ENCODE measurements at regions of chr6 and their contacts with region 1.

Region 1: DNA sequence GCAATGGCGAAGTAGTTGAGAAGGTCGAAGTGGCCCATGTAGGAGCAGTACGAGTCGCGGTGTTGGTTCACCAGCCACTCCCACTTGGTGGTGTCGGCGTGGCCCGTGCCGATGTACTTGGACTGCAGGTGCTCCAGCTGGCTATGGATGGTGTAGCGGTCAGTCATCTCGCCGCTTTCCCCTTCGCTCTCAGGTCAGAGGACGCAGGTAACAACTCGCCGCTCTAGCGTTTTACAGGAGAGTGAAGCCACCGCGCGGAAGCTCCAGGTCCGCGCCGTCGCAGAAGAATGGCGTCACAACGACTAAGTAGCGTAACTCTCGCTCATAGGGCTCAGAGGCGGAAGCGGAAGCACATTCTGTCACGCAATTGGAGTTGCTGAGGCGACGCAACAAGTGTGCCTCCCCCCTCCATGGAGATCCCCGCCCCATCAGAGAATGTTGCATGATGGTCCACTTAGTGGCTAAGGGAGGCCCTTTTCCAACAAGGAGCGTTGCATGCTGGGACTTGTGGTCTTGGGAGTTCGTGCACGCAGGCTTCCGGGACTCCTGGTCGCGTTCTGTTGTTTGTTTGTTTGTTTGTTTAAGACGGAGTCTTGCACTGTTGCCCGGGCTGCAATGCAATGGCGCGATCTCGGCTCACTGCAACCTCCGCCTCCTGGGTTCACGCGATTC is at the start of gene SF3B5:
- DNase-seq: peak; percentile 97
- H3K4me3 Mint-ChIP-seq: peak within 1 kb of the TSS; percentile 93
- H3K27ac Mint-ChIP-seq: peak within 1 kb of the TSS; percentile 92
- H3K4me1 Mint-ChIP-seq: peaks cover 21% of the 10 kb centered on the region
- H3K27me3 Mint-ChIP-seq: no peaks in the 10 kb centered on the region
- total RNA-seq, gene SF3B5: 207 and 208 TPM in 2 replicates

Region 2: GRCh38 chr6:143450453-143451371 is 644.8 kb before region 1 on chr6 and contains the starts of genes ADAT2 and PEX3:
- intact Hi-C with region 1: loop called (anchors 1 kb)
- DNase-seq: peak; percentile 93
- H3K4me3 Mint-ChIP-seq: peak within 1 kb of the TSS; percentile 94
- H3K27ac Mint-ChIP-seq: peak within 1 kb of the TSS; percentile 97
- H3K4me1 Mint-ChIP-seq: peaks cover 36% of the 10 kb centered on the region
- H3K27me3 Mint-ChIP-seq: no peaks in the 10 kb centered on the region
- total RNA-seq, gene ADAT2: 35.7 and 37.6 TPM in 2 replicates
- total RNA-seq, gene PEX3: 21.4 and 23.6 TPM in 2 replicates

Region 3: GRCh38 chr6:143940011-143940597 is 155.4 kb before region 1 on chr6:
- intact Hi-C with region 1: loop called (anchors 5 kb)
- DNase-seq: peak; percentile 47
- H3K4me3 Mint-ChIP-seq: no peak overlapping the region
- H3K27ac Mint-ChIP-seq: no peak overlapping the region
- H3K4me1 Mint-ChIP-seq: peaks cover 6% of the 10 kb centered on the region
- H3K27me3 Mint-ChIP-seq: peaks cover 3% of the 10 kb centered on the region

Region 4: DNA sequence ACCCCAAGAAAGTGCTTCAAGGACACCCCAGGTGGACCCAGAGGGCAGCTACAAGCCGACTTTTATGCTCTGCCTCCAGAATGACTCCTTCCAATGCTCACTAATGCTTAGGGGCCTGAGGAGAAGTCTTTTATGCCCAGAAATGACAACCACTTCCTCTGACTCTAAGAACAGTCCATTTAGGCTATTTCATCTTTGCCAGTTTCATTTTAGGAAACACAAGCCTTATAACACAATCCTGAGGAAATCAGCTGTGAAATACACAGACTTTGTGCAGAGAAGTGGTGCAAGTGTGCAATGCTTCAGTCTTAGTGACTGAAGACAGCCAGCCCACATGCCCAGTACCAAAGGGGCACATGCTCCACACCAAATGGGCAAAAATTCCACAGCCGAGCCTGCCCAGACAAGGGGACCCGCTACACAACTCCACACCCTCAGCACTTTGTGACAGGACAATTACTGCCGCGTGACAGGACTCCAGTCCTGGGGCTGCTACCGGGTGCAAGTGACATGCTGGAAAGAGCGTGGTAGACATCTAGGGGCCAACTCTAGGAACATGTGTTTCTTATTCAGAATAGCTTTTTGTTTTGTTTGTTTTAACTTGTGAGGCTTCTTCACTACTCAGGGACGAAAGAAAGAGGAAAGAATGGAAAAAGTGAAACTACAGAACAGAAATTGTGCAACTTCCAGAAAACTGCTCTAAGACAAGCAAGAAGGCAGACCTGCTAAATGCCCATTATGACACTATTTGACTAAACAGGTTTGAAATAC is 59.2 kb before region 1 on chr6:
- intact Hi-C with region 1: no loop called
- DNase-seq: no peak
- H3K4me3 Mint-ChIP-seq: peak overlapping the region; percentile 3
- H3K27ac Mint-ChIP-seq: peak overlapping the region; percentile 24
- H3K4me1 Mint-ChIP-seq: peaks cover 12% of the 10 kb centered on the region
- H3K27me3 Mint-ChIP-seq: peaks cover 2% of the 10 kb centered on the region

Region 5: GRCh38 chr6:144131248-144131709 is 35.8 kb after region 1 on chr6:
- intact Hi-C with region 1: loop called (anchors 1 kb)
- DNase-seq: no peak
- H3K4me3 Mint-ChIP-seq: peak overlapping the region; percentile 19
- H3K27ac Mint-ChIP-seq: peak overlapping the region; percentile 84
- H3K4me1 Mint-ChIP-seq: peaks cover 29% of the 10 kb centered on the region
- H3K27me3 Mint-ChIP-seq: peaks cover 4% of the 10 kb centered on the region

Region 6: DNA sequence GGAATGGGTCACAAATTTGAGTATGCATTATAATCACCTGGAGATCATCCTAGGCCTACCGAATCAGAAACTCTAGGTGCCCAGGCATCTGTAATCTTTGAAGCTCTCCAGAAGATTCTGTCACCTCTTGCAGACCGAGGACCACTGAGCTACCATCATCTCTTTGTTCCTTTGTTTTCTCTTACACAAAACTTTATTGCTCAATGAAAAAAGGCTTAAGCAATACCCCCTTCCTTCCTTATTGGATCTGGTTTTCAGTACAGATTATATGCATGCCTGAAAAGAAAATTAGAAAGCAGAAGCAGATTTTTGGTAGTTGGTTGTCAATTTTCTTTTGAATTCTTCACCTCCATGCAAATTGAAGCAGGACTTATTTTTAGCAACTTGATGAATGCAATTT is 86.2 kb after region 1 on chr6:
- intact Hi-C with region 1: no loop called
- DNase-seq: no peak
- H3K4me3 Mint-ChIP-seq: no peak overlapping the region
- H3K27ac Mint-ChIP-seq: no peak overlapping the region
- H3K4me1 Mint-ChIP-seq: peaks cover 61% of the 10 kb centered on the region
- H3K27me3 Mint-ChIP-seq: no peaks in the 10 kb centered on the region

Region 7: GRCh38 chr6:144284783-144285547 is 189.5 kb after region 1 on chr6 and contains the start of gene UTRN:
- intact Hi-C with region 1: loop called (anchors 1 kb)
- DNase-seq: peak; percentile 41
- H3K4me3 Mint-ChIP-seq: peak within 1 kb of the TSS; percentile 91
- H3K27ac Mint-ChIP-seq: peak within 1 kb of the TSS; percentile 78
- H3K4me1 Mint-ChIP-seq: peaks cover 11% of the 10 kb centered on the region
- H3K27me3 Mint-ChIP-seq: peaks cover 21% of the 10 kb centered on the region
- total RNA-seq, gene UTRN: 48.6 and 54.6 TPM in 2 replicates

Measured in activated T-helper 2 cell treated with anti-CD3 and anti-CD28 coated beads, Interferon-gamma antibody, Interleukin-2, Interleukin-4, amounts not matched to agents 10 μg/mL and 5 μg/mL and 100 μg/mL, durations not matched to agents 14 hours and 24 hours and 36 hours (primary cell).